ENCODE measurements at regions of chr5 and their contacts with region 1.

Region 1: GRCh38 chr5:176965633-176966032 is 40.9 kb downstream of the UIMC1 start:
- DNase-seq: no peak
- H3K4me3 ChIP-seq: no peak overlapping the region
- H3K27ac ChIP-seq: no peak overlapping the region
- H3K4me1 ChIP-seq: no peaks in the 10 kb centered on the region
- CTCF ChIP-seq: no peak

Region 2: GRCh38 chr5:176985516-176985915 is 19.9 kb after region 1 on chr5:
- CTCF ChIA-PET with region 1: no interaction called
- POLR2A ChIA-PET with region 1: interaction called, 14 read pairs
- intact Hi-C with region 1: no loop called
- DNase-seq: peak; percentile 92
- H3K4me3 ChIP-seq: peak overlapping the region; percentile 50
- H3K27ac ChIP-seq: peak overlapping the region; percentile 95
- H3K4me1 ChIP-seq: peaks cover 66% of the 10 kb centered on the region
- CTCF ChIP-seq: no peak